ENCODE measurements at regions of chr5 and their contacts with region 1.

Region 1: DNA sequence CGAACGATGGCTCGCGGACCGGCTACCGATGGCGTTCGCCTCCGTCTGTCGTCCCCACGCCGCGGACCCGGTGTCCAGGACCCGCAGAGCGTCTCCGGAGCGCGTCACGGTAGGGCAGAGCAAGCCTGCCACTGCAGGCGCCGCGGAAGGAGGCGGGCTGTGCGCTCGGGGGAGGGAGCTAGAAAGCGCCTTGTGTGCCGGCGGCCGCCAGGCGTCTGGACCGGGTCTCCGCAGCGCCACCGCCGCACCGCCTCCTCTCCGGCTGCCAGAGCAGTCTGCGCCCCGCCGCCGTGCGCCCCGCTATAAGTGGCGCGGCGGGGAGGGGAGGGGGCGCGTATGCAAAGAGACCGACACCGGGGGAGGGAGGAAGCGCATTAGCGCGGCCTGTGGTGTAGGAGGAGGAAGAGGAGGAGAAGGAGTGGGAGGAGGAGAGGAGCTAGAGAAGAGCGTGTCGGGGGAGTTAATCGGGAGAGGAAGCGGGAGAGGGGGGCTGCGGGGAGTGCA is at the start of gene ENC1:
- DNase-seq: peak; percentile 94
- total RNA-seq, gene ENC1: 6.6 TPM

Region 2: DNA sequence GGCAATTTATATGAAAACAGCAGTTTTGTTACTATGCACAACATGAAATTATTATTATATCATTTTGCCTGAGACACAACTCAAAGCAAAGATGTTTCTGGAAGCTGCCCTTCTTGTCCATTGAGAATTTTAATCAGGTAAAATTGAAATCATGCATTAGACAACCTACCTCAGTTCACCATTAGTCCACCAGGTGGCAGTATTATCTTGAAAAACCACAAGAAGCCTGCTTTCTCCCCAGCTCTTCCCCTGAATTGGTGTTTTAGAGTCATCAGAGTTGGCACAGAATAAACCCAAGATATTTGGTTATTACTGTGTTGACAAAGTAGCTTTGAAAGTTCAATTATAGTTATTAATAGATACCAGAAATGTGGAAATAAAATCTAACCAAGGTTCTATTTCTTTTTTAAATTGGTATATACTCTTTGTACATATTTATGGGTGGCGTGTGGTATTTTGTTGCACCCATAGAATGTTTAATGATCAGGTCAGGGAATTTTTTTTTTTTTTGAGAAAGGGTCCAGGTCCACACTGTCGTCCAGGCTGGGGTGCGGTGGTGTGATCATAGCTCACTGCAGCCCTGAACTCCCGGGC is 1049.3 kb before region 1 on chr5:
- intact Hi-C with region 1: loop called (anchors 10 kb)
- DNase-seq: no peak

Region 3: GRCh38 chr5:74035521-74035981 is 605.0 kb before region 1 on chr5:
- intact Hi-C with region 1: loop called (anchors 2 kb)
- DNase-seq: no peak

Region 4: DNA sequence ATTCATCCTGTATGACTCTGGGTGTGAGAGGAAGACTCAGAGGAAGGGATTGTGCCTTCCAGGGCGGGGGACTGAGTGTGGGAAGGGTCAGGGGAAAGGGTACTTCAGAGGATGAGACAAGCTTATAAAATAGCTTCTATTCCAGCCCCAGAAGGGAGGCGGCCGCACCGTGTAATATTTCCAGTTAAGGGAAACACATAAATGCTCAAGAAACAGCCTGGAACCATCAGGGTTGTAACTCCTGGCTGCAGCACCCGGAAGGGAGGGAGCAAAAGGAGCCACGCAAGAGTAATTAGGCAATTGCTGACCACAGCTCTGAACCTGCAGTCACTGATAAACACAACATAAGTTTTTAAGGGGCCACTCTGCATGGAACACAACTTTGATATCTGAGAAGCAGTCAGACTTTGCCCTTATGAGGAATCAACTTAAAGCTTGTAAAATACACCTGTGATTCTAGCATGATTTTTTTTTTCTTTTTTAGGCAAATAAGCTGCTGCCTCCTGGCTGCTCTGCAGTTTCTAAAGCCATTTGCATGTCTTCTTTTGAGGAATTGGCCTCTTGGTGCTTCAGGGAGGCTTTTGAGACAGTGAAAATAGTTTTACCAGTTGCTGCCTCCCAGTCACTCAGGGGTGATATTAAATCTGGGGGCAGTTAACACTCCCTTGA is 382.7 kb before region 1 on chr5:
- intact Hi-C with region 1: loop called (anchors 5 kb)
- DNase-seq: peak; percentile 81

Region 5: DNA sequence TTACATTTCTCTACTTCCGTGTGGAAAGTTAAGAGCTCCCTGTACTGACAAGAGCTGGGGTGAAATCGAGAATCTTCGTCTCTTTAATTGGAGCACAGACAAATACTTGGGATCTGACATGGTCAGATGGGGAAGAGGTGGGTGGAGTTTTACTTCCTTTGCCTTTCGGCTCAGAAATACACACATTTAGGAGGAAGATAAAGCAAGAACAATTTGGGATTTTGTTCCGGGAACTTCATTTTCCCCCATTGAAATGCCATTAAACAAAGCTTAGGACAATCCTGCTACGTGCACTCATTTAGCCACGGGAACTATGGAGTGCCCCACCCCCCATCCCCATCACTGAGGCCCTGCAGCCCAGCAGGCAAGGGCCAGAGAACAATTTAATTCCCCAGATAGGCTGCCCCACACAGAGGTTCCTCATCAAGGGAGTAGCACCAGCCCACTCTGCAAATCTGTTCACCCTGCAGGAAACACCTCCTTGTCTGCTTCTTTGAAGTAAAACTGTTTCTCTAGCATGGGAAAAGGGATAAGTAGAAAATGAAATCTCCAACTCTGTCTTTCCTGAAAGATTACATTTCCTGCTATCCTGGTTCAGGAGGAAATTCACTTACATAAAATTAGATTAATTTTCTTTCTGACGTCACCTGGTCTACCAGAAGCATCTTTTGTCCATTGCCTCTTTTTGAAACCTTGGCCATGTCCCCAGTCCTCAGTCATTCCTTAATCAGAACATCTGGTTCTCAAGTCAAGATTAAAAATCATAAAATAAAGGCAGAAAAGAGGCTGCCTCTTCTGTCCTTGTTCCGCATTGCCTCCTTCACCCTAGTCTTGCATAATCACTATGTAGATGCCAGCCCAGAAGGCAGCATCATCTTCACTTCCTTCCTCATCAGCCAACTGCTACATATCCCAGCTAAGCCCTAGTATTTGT is 206.3 kb before region 1 on chr5:
- intact Hi-C with region 1: loop called (anchors 1 kb)
- DNase-seq: no peak

Region 6: DNA sequence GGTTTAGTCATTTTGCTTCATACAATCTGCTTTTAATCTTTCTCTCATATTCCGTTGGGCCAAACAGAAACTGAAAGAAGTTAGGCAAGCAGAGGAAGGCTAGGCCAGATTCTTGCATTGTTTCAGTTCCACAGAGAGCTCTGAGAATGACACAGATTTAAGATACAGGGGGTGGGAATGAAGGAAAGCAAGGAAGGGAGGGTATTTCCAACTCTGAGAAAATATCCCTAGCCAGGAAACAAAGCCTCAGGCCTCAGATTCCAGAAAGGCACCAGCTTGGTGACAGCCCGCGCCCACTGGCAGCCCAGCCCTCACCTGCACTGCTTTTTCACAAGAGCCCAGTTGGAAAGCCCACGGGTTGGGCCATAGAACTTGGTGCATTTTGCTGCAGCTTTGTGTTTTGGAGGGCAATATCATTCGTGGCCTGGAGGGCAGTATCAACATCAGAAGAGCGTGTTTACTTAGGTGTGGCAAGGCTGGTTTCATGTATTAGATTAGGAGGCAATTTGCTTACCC is 63.5 kb before region 1 on chr5:
- intact Hi-C with region 1: loop called (anchors 5 kb)
- DNase-seq: no peak